ENCODE measurements at regions of chr5 and their contacts with region 1.

Region 1: GRCh38 chr5:136249678-136250266 is 56.8 kb upstream of the SMIM32 start:
- DNase-seq: peak; percentile 28
- CTCF ChIP-seq: peak; percentile 81

Region 2: GRCh38 chr5:136269973-136270372 is 20.2 kb after region 1 on chr5:
- CTCF ChIA-PET with region 1: interaction called, 17 read pairs
- POLR2A ChIA-PET with region 1: no interaction called
- DNase-seq: no peak
- CTCF ChIP-seq: no peak

Region 3: GRCh38 chr5:136285096-136285855 is 35.5 kb after region 1 on chr5:
- CTCF ChIA-PET with region 1: no interaction called
- POLR2A ChIA-PET with region 1: no interaction called
- DNase-seq: no peak
- CTCF ChIP-seq: no peak

Region 4: DNA sequence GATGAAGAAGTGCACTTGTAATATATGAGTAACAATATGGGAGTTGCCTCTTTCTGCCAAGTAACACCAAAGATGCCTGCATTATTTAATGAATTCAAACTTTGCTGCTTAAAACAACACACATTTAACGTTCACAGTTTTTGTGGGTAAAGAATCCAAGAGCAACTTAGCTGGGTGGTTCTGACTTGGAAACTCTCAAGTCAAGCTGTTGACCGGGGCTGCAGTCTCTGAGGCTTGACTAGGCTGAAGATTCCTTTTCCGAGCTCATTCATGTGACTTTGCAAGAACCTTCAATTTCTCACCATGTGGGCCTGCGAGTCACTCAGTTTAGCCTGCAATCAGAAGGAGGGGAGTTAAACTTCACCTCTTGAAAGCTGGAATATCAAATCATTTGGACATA is 168.5 kb after region 1 on chr5:
- CTCF ChIA-PET with region 1: interaction called, 26 read pairs
- POLR2A ChIA-PET with region 1: no interaction called
- DNase-seq: no peak
- CTCF ChIP-seq: no peak

Region 5: DNA sequence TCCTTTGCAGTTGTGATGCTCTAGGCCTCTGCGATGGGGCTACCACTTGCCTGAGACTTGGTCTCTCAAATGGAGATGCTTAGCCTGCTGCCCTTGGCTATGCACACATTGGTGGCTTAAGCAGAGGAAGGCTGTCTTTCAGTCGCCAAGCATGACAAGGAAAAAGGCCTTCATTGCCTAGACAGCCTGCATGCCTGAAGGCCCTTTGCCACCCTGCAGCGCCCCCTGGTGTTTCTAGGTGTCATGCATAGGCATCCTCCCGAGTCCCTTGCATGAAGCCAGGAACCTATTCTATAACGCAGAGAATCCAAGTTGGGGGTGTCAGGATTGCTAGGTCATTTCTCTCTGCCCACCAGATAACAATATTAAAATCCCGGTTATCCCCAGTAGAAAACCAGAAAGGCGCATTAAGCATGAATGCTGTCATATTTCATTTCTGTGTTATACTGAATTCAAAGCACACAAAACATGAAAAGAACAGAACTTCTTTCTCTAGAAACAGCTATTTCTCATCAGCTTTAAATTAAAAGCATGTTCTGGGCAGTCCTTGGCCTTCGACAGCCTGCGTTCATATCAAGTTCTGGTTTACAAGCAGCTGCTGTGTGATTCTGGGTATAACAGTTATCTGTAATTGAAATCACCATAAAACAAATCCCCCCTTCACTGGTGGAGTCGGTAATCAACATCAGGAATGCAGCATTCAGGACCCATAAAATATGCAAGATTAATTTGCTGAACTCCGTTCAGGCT is 175.2 kb after region 1 on chr5:
- CTCF ChIA-PET with region 1: interaction called, 26 read pairs
- POLR2A ChIA-PET with region 1: no interaction called
- DNase-seq: peak; percentile 71
- CTCF ChIP-seq: peak; percentile 76

Region 6: DNA sequence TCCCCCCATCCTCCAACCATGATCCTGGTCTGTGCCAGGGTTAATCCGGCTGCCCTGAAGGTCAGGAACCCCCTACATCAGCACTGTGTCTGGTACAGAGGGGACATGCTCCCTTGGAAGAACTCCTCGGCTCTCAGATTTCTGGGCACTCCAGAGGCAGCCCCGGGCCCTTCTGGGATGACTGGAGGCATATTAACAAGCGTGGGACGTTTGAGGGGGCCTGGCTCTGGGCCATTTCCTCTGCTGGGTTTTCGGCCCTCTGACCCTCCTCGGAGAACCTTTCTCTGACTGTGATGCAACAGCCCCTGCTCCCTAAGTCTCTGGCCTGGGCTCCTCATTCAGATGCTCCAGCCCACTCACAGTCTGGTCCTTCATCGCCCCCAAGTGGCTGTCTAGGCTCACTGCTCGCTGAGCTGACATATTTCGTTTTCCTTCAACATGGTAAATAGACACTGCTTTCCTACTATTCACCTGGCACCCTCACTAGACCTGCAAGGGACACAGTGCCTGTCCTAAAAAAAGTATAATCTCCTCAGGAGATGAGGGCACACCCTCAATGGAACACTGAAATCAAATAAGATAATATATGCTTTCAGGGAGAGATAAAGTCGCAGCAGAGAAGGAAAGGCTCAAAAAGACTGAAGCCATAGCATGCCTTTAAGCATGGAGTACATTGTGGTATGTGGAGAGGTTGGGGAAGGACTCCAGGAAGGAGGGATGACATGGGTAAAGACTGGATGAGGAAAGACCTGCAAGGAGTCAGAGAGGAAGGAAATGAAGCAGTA is 520.3 kb after region 1 on chr5:
- CTCF ChIA-PET with region 1: interaction called, 32 read pairs
- POLR2A ChIA-PET with region 1: no interaction called
- DNase-seq: peak; percentile 68
- CTCF ChIP-seq: peak; percentile 76

Measured in GM10248 (cell line).